ENCODE measurements at regions of chr11 and their contacts with region 1.

Region 1: GRCh38 chr11:65329944-65330403 is 3.7 kb upstream of the DPF2 start:
- DNase-seq: peak; percentile 89
- ATAC-seq: no peak
- H3K4me3 Mint-ChIP-seq: no peak overlapping the region
- H3K27ac Mint-ChIP-seq: no peak overlapping the region
- H3K4me1 Mint-ChIP-seq: peaks cover 15% of the 10 kb centered on the region
- H3K27me3 Mint-ChIP-seq: peaks cover 6% of the 10 kb centered on the region

Region 2: GRCh38 chr11:65251476-65251875 is 78.5 kb before region 1 on chr11:
- CTCF ChIA-PET with region 1: interaction called, 11 read pairs
- DNase-seq: no peak
- ATAC-seq: no peak
- H3K4me3 Mint-ChIP-seq: no peak overlapping the region
- H3K27ac Mint-ChIP-seq: no peak overlapping the region
- H3K4me1 Mint-ChIP-seq: peaks cover 2% of the 10 kb centered on the region
- H3K27me3 Mint-ChIP-seq: peaks cover 7% of the 10 kb centered on the region

Region 3: DNA sequence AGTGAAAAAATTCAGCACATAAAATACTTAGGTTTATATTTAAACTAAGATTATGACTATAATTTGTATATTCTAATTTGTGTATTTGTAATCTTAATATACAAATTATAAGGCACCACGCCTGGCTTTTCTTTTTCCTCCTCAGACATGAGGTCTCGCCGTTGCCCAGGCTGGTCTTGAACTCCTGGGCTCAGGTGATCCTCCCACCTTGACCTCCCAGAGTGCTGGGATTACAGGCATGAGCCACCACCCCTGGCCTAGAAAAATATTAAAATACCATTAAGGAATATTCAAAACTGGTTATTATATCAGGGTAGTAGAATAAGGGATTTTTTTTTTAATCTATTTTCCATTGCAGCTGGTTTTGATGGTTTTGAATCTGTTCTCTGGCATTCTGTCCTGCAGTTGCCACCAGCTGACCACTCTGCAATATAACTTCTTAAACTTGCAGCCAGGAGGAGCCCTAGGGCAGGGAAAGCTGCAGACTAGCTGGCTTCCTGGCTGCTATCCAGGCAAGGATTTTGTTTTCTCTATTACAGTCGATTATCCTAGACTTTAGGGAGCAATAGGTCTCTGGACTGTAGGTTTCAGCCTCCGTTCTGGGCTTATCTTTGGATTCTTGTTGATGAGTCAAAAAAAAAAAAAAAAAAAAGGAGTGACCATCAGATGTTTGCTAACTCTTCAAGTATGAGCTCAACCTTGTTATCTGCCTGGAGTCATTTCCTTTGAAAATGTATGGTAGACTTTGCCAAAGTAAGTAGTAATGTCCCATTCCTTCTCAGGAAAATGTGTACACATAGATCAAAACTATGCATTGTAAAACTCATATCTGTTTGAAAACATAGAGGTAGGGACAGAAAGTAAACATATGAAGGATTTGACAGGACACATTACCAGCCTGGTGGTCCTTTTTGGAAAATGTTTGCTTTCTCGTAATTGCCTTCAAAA is 55.0 kb before region 1 on chr11:
- CTCF ChIA-PET with region 1: interaction called, 81 read pairs
- DNase-seq: peak; percentile 49
- ATAC-seq: peak; percentile 63
- H3K4me3 Mint-ChIP-seq: no peak overlapping the region
- H3K27ac Mint-ChIP-seq: no peak overlapping the region
- H3K4me1 Mint-ChIP-seq: peaks cover 20% of the 10 kb centered on the region
- H3K27me3 Mint-ChIP-seq: no peaks in the 10 kb centered on the region

Region 4: DNA sequence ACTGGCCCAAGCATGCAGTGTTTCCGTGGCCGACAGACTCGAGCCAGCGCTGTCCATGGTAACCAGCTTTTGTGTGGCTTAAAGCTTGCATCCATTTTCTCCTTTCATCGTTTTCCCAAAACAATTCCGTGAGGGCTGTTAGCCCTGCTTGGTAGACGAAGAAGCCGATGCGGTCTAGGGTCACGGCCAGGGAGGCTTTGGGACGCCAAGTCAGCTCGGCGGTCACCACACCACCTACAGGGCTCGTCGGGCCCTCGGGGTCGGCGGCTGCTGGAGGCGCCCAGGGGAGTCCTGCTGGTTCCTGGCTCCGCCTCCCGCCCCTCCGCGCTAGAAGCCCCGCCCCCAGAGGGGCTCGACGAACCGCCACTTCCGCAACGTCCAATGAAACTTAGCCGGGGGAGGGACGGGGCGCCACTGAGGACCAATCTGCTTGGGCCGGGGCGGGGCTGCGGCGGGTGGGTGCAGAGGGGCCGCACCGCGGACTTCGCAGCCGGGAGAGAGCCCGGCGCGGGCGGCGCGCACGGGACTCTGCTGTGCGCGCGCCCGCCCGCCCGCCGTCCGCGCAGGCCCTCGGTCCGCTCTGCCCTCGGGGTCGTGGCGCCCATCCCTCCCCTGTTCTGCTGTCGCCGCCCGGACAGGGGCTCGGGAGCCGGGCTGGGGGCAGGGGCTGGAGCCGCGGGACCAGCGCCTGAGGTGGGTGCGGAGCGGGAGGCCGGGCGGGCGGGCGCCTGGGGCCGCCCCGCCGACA is 24.5 kb after region 1 on chr11 and contains the start of gene TIGD3:
- CTCF ChIA-PET with region 1: interaction called, 16 read pairs
- DNase-seq: peak; percentile 98
- ATAC-seq: peak; percentile 98
- H3K4me3 Mint-ChIP-seq: peak within 1 kb of the TSS; percentile 85
- H3K27ac Mint-ChIP-seq: peak within 1 kb of the TSS; percentile 82
- H3K4me1 Mint-ChIP-seq: peaks cover 25% of the 10 kb centered on the region
- H3K27me3 Mint-ChIP-seq: peaks cover 15% of the 10 kb centered on the region
- total RNA-seq, gene TIGD3: 1.1 TPM

Measured in activated CD8-positive, alpha-beta memory T cell treated with anti-CD3 and anti-CD28 coated beads, Interleukin-2, amount 10 ng/mL, durations not matched to agents 7 days and 5 days (primary cell).